ENCODE measurements at regions of chr19 and their contacts with region 1.

Region 1: GRCh38 chr19:45478454-45479238 is 10.8 kb downstream of the FOSB start:
- DNase-seq: peak; percentile 79
- CTCF ChIP-seq: peak; percentile 91

Region 2: GRCh38 chr19:45376045-45376724 is 102.5 kb before region 1 on chr19:
- CTCF ChIA-PET with region 1: no interaction called
- POLR2A ChIA-PET with region 1: no interaction called
- DNase-seq: no peak
- CTCF ChIP-seq: no peak

Region 3: GRCh38 chr19:45413497-45413896 is 65.1 kb before region 1 on chr19:
- CTCF ChIA-PET with region 1: interaction called, 13 read pairs
- POLR2A ChIA-PET with region 1: no interaction called
- DNase-seq: no peak
- CTCF ChIP-seq: no peak

Region 4: DNA sequence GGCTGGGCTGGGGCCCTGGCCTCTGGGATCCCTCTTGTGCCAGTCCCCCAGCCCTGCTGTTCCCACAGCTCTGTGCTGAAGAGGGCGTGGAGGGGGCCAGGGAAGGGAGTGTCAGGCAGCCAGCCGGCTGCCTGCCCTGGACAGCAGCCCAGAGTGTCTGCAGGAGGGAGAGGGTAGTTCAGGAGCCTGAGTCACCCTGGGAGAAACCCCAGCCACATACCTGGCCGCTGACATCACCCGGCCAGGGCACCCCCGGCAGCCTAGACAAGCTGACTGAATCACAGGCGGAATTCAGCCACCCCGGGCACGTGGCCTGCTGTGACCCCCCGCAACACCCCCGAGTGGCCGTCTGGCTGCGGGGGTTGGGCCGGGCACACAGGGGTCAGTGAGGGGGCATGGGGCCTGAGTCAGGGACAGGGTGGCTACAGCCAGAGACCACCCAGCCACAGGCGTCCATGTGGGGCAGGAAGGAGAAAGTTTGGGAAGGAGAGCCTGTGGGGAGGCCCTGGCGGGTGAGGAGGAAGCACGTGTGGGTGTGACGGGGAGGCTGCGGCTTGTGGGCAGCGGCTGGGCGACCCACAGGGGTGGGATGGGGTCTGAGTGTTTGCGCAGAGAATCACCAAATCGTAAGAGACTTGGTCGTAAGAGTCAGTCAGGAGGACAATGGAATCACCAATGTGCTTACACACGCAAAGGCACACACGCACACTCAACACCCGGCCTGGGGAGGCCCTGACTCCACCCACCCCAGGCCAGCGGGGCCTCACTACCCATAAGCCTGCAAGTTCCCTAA is 22.7 kb before region 1 on chr19:
- CTCF ChIA-PET with region 1: interaction called, 21 read pairs
- POLR2A ChIA-PET with region 1: interaction called, 7 read pairs
- DNase-seq: peak; percentile 81
- CTCF ChIP-seq: no peak

Region 5: DNA sequence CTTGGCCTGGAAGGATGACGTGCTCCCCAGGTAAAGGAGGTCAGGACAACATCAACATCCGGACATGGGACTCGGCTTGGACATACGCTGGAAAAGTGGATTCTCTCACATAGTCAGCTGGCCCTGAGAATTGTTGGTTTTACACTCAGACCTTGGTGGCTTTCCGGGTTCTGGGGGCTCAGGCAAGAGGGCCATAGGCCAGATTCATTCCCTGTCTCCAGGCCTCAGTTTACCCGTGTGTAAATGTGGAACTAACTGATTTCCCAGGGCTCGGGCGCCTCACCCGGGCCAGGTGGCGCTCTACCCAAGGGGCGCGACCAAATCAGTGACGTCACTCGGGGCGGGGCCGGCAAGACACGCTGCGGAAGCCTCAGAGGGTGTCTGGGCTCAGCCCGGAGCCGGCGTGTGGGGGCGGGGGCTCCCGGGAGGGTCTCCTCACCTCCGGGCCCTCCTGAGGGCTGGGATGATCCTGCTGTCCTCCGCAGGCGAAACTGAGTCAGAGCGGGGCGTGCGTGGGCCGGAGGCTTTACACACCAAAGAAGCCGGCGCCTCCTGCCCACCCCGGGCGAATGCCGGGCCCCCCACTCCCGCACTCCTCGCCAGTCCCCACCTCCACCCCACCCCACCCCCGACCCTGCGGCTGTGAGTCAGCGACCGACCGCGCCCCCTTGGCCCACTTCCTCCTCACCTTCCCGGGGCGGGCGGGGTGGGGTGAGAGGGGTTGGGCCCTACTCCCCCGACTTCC is 27.8 kb after region 1 on chr19:
- CTCF ChIA-PET with region 1: interaction called, 14 read pairs
- POLR2A ChIA-PET with region 1: no interaction called
- DNase-seq: peak; percentile 93
- CTCF ChIP-seq: peak; percentile 81